Posterior vena cava (tissue), 2 donors: ENCODE measurements at regions of chr2 and their contacts with region 1.

Region 1: GRCh38 chr2:74429487-74430451 is 8.2 kb downstream of the WDR54 start:
- DNase-seq: no peak

Region 2: DNA sequence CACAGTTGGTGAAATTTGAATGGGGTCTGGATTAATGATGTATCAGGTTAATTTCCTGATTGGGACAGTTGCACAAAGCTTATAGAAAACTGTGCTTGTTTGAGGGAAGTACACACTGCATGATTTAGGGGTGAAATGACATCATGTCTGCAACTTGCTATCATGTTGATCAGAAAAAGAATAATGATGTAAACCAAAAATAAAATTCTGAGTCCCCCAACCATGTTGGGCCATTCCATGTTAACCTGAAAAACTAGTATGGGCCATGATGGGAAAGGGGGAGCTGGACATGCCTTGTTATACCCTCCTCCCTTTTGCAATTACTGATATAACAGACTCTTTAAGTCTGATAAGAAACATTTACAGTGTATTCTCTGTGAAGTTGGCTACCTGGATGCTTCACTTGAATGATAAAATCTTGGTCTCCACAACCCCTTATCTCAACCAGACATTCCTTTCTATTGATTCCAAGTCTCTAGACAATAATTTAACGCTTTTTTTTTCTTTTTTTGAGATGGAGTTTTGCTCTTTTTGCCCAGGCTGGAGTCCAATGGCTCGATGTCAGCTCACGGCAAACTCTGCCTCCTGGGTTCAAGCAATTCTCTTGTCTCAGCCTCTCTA is 20.9 kb after region 1 on chr2:
- intact Hi-C with region 1: loop called in 1 of 2 experiments (anchors 1 kb)
- DNase-seq: no peak